WTC11 (cell line): ENCODE measurements at regions of chr11 and their contacts with region 1.

Region 1: GRCh38 chr11:118171269-118172062 is 5.0 kb downstream of the SCN2B start:
- DNase-seq: peak; percentile 89
- ATAC-seq: peak; percentile 79
- H3K4me3 Mint-ChIP-seq: peak overlapping the region; percentile 64
- H3K27ac Mint-ChIP-seq: no peak overlapping the region
- H3K4me1 Mint-ChIP-seq: peaks cover 43% of the 10 kb centered on the region
- H3K27me3 Mint-ChIP-seq: peaks cover 90% of the 10 kb centered on the region
- CTCF ChIP-seq: peak; percentile 92

Region 2: DNA sequence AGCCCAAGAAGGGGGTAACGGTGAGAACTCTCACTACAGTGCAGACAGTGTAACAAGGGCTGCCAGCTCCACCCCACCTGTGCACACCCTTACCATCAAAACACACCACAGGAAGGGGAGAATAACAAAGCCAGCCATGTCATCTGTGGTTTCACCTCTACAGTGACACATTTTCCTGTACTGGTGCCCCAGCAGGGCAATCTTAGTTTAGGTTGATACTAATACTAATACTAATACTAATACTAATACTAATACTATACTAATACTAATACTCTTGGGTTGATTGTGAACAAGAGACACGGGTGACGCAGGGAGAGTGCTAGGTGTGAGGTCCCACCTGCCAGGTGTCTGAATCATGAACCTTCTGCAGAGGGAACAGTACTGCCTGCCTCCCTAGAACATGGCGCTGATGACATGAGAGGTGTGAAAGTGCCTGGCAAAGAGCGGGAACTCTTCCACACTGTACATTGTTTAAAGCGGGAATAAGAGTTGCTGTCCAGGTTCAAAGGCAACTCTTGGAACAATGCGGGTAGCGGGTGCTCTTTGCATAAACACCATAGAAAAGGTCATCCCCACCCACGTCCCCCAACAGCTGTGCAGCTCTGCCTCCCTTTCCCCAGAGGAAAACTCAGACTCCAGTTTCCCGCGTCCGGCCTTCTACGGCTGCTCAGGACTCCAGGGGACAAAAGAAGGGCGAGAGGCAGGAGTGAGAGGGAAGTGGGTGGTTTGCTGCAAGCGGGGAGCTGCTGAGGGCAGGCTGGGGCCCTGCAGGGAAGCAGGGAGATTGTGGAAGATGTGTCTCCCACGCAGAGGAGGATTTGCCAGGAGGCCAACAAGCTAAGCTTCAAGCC is 119.6 kb before region 1 on chr11:
- CTCF ChIA-PET with region 1: interaction called, 16 read pairs
- POLR2A ChIA-PET with region 1: no interaction called
- DNase-seq: no peak
- ATAC-seq: no peak
- H3K4me3 Mint-ChIP-seq: no peak overlapping the region
- H3K27ac Mint-ChIP-seq: no peak overlapping the region
- H3K4me1 Mint-ChIP-seq: no peaks in the 10 kb centered on the region; the same call in 1 of the 2 replicates
- H3K27me3 Mint-ChIP-seq: no peaks in the 10 kb centered on the region
- CTCF ChIP-seq: no peak

Region 3: DNA sequence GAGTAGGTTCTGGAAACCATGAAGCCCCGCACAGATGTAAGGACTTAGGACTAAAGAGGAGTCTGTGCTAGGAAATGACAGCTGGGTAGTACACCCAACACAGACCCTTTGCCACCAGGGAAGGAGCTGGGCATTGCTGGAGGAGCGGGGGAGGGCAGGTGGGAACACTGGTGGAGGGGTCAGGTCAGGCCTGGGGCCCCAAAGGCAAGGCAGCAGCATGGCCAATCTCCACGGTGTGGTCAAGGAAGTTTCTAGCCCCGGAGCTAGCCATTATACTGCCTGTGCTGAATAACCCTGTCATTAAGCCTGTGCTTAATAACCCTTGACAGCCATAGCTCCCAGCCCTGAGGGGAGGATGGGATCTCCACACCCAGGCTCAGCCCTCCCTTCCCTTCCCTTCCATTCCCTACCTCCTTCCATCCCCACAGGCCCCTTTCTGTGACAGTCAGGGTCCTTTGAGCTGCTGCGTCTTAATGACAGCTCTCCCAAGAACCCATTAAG is 92.5 kb before region 1 on chr11:
- CTCF ChIA-PET with region 1: interaction called, 11 read pairs
- POLR2A ChIA-PET with region 1: no interaction called
- DNase-seq: no peak
- ATAC-seq: no peak
- H3K4me3 Mint-ChIP-seq: no peak overlapping the region
- H3K27ac Mint-ChIP-seq: no peak overlapping the region
- H3K4me1 Mint-ChIP-seq: peaks cover 31% of the 10 kb centered on the region
- H3K27me3 Mint-ChIP-seq: no peaks in the 10 kb centered on the region
- CTCF ChIP-seq: no peak

Region 4: GRCh38 chr11:118145285-118146227 is 25.9 kb before region 1 on chr11:
- CTCF ChIA-PET with region 1: interaction called, 153 read pairs
- POLR2A ChIA-PET with region 1: interaction called, 4 read pairs
- DNase-seq: peak; percentile 93
- ATAC-seq: peak; percentile 80
- H3K4me3 Mint-ChIP-seq: peak overlapping the region; percentile 70
- H3K27ac Mint-ChIP-seq: no peak overlapping the region
- H3K4me1 Mint-ChIP-seq: peaks cover 33% of the 10 kb centered on the region
- H3K27me3 Mint-ChIP-seq: peaks cover 58% of the 10 kb centered on the region
- CTCF ChIP-seq: peak; percentile 89

Region 5: GRCh38 chr11:118152552-118153471 is 18.7 kb before region 1 on chr11 and contains the start of gene SCN4B:
- CTCF ChIA-PET with region 1: interaction called, 153 read pairs
- POLR2A ChIA-PET with region 1: interaction called, 3 read pairs
- DNase-seq: peak; percentile 81
- ATAC-seq: peak; percentile 62
- H3K4me3 Mint-ChIP-seq: peak within 1 kb of the TSS; percentile 77
- H3K27ac Mint-ChIP-seq: no peak within 1 kb of the TSS
- H3K4me1 Mint-ChIP-seq: peaks cover 69% of the 10 kb centered on the region
- H3K27me3 Mint-ChIP-seq: peaks cover 84% of the 10 kb centered on the region
- CTCF ChIP-seq: no peak
- total RNA-seq, gene SCN4B: 3.5 to 4.5 TPM (median 4.4 TPM) in 3 replicates

Region 6: GRCh38 chr11:118295834-118296454 is 124.5 kb after region 1 on chr11:
- CTCF ChIA-PET with region 1: interaction called, 12 read pairs
- POLR2A ChIA-PET with region 1: no interaction called
- DNase-seq: no peak
- ATAC-seq: peak; percentile 73
- H3K4me3 Mint-ChIP-seq: no peak overlapping the region
- H3K27ac Mint-ChIP-seq: no peak overlapping the region
- H3K4me1 Mint-ChIP-seq: peaks cover 7% of the 10 kb centered on the region; the same call in 1 of the 2 replicates
- H3K27me3 Mint-ChIP-seq: peaks cover 16% of the 10 kb centered on the region
- CTCF ChIP-seq: no peak

Region 7: DNA sequence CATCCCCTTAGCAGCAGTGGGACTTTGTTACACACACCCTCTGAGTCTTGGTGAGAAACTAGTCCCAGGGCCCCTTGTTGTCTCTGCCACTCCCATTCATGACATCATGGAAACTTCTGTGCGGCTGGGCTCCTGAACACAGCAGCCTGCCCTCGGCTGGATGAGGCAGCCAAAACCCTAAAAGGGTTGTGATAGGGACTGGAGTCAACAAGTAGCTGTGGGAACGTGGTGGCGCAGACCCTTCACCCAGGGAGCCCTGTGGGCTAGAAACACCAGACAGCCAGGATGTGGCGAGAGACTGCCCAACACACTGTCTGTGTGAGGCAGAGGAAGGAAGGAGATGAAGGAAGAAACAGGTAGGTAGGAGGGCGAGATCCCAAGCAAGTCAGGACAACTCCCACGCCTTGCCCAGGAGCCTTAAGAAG is 167.2 kb after region 1 on chr11:
- CTCF ChIA-PET with region 1: no interaction called
- POLR2A ChIA-PET with region 1: no interaction called
- DNase-seq: no peak
- ATAC-seq: no peak
- H3K4me3 Mint-ChIP-seq: no peak overlapping the region
- H3K27ac Mint-ChIP-seq: peak overlapping the region; percentile 82
- H3K4me1 Mint-ChIP-seq: peaks cover 2% of the 10 kb centered on the region; the same call in 1 of the 2 replicates
- H3K27me3 Mint-ChIP-seq: peaks cover 19% of the 10 kb centered on the region
- CTCF ChIP-seq: no peak